GM13977 (cell line): ENCODE measurements at regions of chr17 and their contacts with region 1.

Region 1: GRCh38 chr17:40209404-40210093 is 9.6 kb upstream of the WIPF2 start:
- DNase-seq: no peak
- CTCF ChIP-seq: no peak

Region 2: DNA sequence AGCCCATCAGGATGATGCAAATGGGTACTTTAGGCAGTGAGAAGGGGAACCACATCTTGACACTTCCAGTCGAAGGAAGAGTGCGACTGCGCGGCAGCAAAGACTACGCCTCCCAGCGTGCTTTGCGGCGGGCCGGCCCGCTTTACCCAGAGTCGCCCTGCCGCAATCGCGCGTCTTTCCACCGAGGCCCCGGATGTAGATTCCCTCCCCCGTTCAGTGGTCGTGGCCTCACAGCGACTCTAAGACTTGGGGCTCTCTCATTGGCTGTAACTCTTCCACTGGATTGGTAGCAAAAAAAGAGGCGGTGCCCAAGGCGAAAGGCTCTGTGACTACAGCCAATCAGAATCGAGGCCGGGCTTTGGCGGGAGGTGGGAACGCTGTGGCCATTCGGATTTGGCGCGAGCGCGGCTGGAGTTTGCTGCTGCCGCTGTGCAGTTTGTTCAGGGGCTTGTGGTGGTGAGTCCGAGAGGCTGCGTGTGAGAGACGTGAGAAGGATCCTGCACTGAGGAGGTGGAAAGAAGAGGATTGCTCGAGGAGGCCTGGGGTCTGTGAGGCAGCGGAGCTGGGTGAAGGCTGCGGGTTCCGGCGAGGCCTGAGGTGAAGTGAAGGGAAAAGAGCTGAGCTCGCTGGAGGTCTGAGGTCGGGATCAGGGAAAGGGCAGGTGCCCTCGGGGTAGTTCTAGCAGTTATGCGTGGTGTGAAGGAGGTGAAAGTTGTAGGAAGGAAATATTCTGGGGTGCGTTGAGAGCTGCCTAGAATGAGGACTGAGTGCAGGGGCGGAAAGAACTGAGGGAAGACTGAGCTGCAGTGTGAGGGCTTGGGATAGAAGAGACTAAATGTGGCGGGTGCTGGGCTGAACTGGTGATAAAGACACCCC is 78.2 kb after region 1 on chr17 and contains the start of gene CDC6:
- in situ Hi-C with region 1: loop called (anchors 10 kb)
- DNase-seq: peak; percentile 95
- CTCF ChIP-seq: no peak